RWPE1 (cell line): ENCODE measurements at regions of chr16 and their contacts with region 1.

Region 1: GRCh38 chr16:75198135-75198600 is 8.8 kb downstream of the CTRB2 start:
- DNase-seq: no peak
- H3K27ac ChIP-seq: no peak overlapping the region
- CTCF ChIP-seq: no peak

Region 2: DNA sequence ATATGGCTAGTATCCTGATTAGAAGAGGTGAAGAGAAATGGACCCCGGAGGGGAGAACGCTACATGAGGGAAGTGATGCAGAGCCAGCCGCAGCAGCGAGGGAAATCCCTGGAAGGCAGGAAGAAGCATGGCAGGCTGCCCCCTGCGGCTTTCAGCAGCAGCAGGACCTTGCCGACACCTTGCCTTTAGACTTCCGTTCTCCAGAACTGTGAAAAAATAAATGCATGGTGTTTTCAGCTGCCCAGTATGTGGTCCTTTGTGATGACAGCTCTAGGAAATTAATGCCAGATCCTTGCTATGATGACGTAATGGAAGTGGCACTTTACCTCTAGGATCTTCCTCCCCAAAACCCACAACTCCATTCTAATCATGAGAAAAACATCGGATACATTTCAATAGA is 59.5 kb before region 1 on chr16:
- CTCF ChIA-PET with region 1: no interaction called
- POLR2A ChIA-PET with region 1: no interaction called
- DNase-seq: no peak
- H3K27ac ChIP-seq: no peak overlapping the region
- CTCF ChIP-seq: no peak

Region 3: DNA sequence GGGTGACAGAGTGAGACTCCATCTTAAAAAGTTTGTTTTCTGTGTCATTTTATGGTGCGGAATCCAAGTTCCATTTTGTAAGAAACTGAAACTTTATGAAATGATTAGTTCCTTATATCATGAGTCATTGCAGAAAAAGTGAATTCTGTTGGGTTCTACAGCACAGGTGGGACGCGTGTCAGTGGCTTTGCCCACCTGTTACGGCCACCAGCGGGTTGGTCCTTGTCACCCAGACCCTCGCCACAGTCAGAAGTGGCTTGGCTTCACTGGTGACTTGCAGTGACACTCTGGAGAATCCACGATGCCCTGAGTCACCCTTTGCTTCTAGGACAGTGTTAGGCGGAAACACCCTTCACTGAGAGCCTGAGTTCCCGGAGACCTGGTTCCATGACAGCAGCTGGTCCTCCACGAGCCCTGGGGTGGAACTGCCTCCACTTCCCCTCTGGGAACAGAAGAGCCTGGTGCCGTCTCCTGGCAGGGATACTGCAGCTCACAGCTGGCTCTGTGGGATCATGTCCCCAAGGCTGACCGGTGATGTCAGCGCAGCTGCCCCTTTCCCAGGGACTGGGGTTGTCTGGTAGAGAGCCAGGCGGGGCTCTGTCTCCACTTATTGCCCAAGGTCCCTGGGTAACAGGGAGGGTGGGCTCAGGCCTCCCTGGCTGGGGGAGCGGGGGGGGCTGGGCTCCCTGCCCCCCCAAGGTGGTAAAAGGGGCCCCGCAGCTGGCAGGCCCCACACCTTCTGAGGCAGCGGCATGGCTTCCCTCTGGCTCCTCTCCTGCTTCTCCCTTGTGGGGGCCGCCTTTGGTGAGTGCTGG is 20.3 kb after region 1 on chr16 and contains the start of gene CTRB1:
- CTCF ChIA-PET with region 1: interaction called, 11 read pairs
- POLR2A ChIA-PET with region 1: no interaction called
- DNase-seq: no peak
- H3K27ac ChIP-seq: no peak within 1 kb of the TSS
- CTCF ChIP-seq: no peak

Region 4: GRCh38 chr16:75402821-75403475 is 204.8 kb after region 1 on chr16:
- CTCF ChIA-PET with region 1: interaction called, 15 read pairs
- POLR2A ChIA-PET with region 1: no interaction called
- DNase-seq: no peak
- H3K27ac ChIP-seq: no peak overlapping the region
- CTCF ChIP-seq: peak; percentile 75